ENCODE measurements at regions of chr19 and their contacts with region 1.

Region 1: GRCh38 chr19:17405250-17406038 is at the start of gene BST2:
- DNase-seq: peak; percentile 95
- H3K4me3 ChIP-seq: peak within 1 kb of the TSS; percentile 90
- H3K27ac ChIP-seq: peak within 1 kb of the TSS; percentile 93
- H3K4me1 ChIP-seq: peaks cover 31% of the 10 kb centered on the region
- CTCF ChIP-seq: no peak
- total RNA-seq, gene BST2: 101 and 134 TPM in 2 replicates

Region 2: DNA sequence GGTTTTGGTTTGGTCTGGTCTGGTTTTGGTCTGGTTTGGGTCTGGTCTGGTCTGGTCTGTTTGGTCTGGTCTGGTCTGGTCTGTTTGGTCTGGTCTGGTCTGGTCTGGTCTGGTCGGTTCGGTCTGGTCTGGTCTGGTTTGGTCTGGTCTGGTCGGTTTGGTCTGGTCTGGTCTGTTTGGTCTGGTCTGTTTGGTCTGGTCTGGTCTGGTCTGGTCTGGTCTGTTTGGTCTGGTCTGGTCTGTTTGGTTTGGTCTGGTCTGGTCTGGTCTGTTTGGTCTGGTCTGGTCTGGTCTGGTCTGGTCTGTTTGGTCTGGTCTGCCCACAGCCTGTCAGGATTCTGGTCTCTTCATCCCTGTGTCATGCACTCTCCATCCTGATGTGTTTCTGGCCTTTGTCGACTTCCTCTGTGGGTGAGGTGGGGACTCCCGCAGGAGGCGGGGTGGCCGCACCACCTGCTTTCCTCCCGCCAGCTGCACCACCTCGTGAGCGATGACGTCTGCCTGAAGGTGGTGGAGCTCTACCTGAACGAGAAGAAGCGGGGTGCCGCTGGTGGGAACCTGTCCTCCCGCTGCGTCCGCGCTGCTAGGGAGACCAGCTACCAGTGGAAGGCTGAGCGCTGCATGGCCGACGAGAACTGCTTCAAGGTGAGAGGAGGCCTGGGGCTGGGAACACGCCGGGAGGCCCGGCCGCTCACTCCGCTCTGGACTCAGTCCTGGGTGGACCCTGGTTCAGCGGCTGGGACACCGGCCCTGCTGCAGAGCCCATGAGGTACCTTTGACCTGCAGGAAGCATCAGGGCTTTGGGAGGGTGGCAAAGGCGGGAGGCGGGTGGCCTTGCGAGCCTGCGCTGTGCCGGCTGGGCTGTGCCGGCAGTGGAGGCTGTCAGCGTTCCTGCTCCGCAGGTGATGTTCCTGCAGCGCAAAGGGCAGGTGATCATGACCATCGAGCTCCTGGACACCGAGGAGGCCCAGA is 529.6 kb before region 1 on chr19:
- CTCF ChIA-PET with region 1: no interaction called
- POLR2A ChIA-PET with region 1: interaction called, 10 read pairs
- intact Hi-C with region 1: no loop called
- DNase-seq: peak; percentile 47
- H3K4me3 ChIP-seq: no peak overlapping the region
- H3K27ac ChIP-seq: no peak overlapping the region
- H3K4me1 ChIP-seq: peaks cover 4% of the 10 kb centered on the region
- CTCF ChIP-seq: no peak

Region 3: GRCh38 chr19:17235618-17236377 is 169.6 kb before region 1 on chr19:
- CTCF ChIA-PET with region 1: no interaction called
- POLR2A ChIA-PET with region 1: no interaction called
- intact Hi-C with region 1: no loop called
- DNase-seq: peak; percentile 82
- H3K4me3 ChIP-seq: peak overlapping the region; percentile 69
- H3K27ac ChIP-seq: peak overlapping the region; percentile 58
- H3K4me1 ChIP-seq: peaks cover 25% of the 10 kb centered on the region
- CTCF ChIP-seq: peak; percentile 73

Region 4: DNA sequence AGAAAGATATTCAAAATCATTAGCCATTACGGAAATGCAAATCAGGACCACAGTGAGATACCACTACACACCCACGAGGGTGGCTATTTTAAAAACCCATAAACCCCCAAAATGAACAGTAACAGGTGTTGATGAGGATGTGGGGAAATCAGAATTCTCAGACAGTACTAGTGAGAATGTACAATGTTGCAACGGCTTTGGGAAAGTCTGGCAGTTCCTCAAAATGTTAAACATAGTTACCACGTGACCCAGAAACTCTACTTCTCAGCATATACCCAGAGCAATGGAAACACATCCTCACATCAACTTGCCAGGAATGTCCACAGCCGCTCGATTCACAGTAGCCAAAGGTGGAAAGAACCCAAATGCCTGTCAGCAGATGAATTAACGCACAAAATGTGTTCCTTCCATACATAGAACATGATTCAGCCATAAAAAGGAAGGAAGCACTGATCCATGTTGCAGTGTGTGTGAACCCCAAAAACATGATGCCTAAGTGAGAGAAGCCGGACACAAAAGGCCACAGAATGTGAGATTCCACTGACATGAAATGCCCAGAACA is 35.3 kb before region 1 on chr19:
- CTCF ChIA-PET with region 1: no interaction called
- POLR2A ChIA-PET with region 1: no interaction called
- intact Hi-C with region 1: no loop called
- DNase-seq: peak; percentile 85
- H3K4me3 ChIP-seq: peak overlapping the region; percentile 29
- H3K27ac ChIP-seq: peak overlapping the region; percentile 92
- H3K4me1 ChIP-seq: peaks cover 58% of the 10 kb centered on the region
- CTCF ChIP-seq: no peak

Region 5: GRCh38 chr19:17419621-17420466 is 14.4 kb after region 1 on chr19 and contains the start of gene MVB12A:
- CTCF ChIA-PET with region 1: interaction called, 3 read pairs
- POLR2A ChIA-PET with region 1: interaction called, 13 read pairs
- intact Hi-C with region 1: no loop called
- DNase-seq: peak; percentile 99
- H3K4me3 ChIP-seq: peak within 1 kb of the TSS; percentile 74
- H3K27ac ChIP-seq: peak within 1 kb of the TSS; percentile 68
- H3K4me1 ChIP-seq: peaks cover 28% of the 10 kb centered on the region
- CTCF ChIP-seq: no peak
- total RNA-seq, gene MVB12A: 47.4 and 57.3 TPM in 2 replicates

Region 6: GRCh38 chr19:17511724-17512573 is 106.5 kb after region 1 on chr19:
- CTCF ChIA-PET with region 1: no interaction called
- POLR2A ChIA-PET with region 1: no interaction called
- intact Hi-C with region 1: loop called (anchors 5 kb)
- DNase-seq: peak; percentile 80
- H3K4me3 ChIP-seq: peak overlapping the region; percentile 83
- H3K27ac ChIP-seq: peak overlapping the region; percentile 74
- H3K4me1 ChIP-seq: peaks cover 17% of the 10 kb centered on the region
- CTCF ChIP-seq: peak; percentile 51

Region 7: GRCh38 chr19:17616961-17617806 is 211.7 kb after region 1 on chr19:
- CTCF ChIA-PET with region 1: no interaction called
- POLR2A ChIA-PET with region 1: no interaction called
- intact Hi-C with region 1: no loop called
- DNase-seq: peak; percentile 22
- H3K4me3 ChIP-seq: no peak overlapping the region
- H3K27ac ChIP-seq: no peak overlapping the region
- H3K4me1 ChIP-seq: peaks cover 10% of the 10 kb centered on the region
- CTCF ChIP-seq: no peak